CD14-positive monocyte (primary cell): ENCODE measurements at regions of chr1 and their contacts with region 1.

Region 1: DNA sequence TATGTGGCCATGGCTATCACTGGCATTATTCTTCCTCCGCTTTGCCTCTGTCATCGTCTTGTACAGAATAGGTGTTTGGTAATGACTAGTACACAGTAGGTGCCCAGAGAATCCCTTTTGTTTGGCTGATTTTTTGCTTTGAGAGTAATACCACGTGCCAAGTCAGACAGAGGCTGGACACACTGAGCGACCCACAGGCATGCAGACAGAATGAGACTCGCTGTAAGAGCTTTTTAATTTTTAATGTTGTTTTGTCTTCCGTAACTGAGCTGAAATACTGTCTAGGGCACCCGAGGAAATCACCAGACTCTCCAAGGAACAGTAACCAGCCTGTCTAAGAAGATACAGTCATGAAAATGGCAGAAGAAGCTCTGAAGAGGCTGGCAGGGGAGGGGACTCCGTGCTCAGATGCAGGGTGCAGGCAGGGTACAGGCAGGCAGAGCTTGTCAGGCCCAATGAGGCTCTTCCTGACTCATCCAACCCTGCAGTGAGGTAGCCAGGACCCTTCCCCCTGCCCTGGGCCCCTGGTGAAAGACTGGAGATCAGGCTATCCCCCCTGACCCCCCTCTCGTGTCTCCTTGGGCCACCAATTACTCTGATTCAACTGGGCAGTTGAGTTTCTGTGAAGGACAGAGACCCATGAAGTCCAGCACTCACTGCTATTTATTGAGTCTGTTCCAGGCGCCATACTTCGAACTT is 60.1 kb upstream of the ECE1 start:
- DNase-seq: no peak
- H3K4me3 ChIP-seq: no peak overlapping the region
- H3K4me3 Mint-ChIP-seq: peak overlapping the region in 1 of 2 donors; percentile 58
- H3K27ac ChIP-seq: no peak overlapping the region
- H3K27ac Mint-ChIP-seq: no peak overlapping the region
- H3K4me1 ChIP-seq: peaks cover 9 to 10% of the 10 kb centered on the region in 2 donors
- H3K4me1 Mint-ChIP-seq: no peaks in the 10 kb centered on the region
- H3K27me3 ChIP-seq: peaks cover 29 to 48% of the 10 kb centered on the region in 2 donors
- H3K27me3 Mint-ChIP-seq: peaks cover 19 to 41% (median 31%) of the 10 kb centered on the region in 3 donors
- CTCF ChIP-seq: no peak

Region 2: DNA sequence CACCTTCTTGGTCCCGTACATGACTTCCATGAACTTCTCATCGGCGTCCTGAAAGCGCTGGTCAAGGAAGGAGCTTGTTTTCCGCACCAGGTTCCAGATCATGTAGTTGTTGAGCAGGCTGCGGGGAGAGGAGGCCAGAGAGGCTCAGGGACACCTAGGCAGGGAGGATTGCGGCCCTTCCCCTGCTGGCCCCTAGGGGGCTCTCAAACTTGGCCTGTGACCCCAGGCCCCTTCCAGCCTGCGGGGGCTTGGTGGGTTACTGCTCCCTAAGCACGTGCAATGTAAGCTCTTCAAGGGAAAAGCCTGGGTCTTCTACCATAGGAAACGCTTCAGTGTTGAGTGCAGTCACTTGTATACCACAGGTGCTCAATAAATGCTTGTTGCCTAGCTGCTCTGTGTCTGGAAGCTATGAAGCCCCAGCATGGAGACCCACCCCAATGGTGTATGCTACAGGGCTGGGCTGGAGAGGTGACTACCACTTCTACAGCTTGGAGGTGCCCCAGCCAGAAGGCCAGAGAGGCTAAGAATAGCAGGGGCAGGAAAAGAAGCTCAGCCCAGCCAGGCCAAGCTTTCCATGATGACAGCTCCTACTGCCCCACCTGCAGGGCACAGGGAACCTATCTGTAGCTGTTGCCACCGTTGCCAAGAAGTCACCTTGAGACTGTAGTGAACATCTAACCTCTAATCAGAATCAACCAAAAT is 105.2 kb before region 1 on chr1:
- intact Hi-C with region 1: loop called in 1 of 2 experiments (anchors 5 kb)
- DNase-seq: no peak
- H3K4me3 ChIP-seq: no peak overlapping the region
- H3K4me3 Mint-ChIP-seq: no peak overlapping the region
- H3K27ac ChIP-seq: no peak overlapping the region
- H3K27ac Mint-ChIP-seq: no peak overlapping the region
- H3K4me1 ChIP-seq: no peaks in the 10 kb centered on the region
- H3K4me1 Mint-ChIP-seq: no peaks in the 10 kb centered on the region
- H3K27me3 ChIP-seq: no peaks in the 10 kb centered on the region
- H3K27me3 Mint-ChIP-seq: peaks cover 2 to 22% (median 13%) of the 10 kb centered on the region in 3 donors
- CTCF ChIP-seq: peak; percentile 65